Activated CD8-positive, alpha-beta T cell treated with anti-CD3 and anti-CD28 coated beads for 36 hours (primary cell): ENCODE measurements at regions of chr11 and their contacts with region 1.

Region 1: GRCh38 chr11:75328426-75329277 is 22.8 kb downstream of the ARRB1 start:
- DNase-seq: peak; percentile 81
- ATAC-seq: peak; percentile 67
- H3K4me3 Mint-ChIP-seq: no peak overlapping the region
- H3K27ac Mint-ChIP-seq: peak overlapping the region; percentile 18
- H3K4me1 Mint-ChIP-seq: peaks cover 65% of the 10 kb centered on the region
- H3K27me3 Mint-ChIP-seq: no peaks in the 10 kb centered on the region
- CTCF ChIP-seq: no peak

Region 2: DNA sequence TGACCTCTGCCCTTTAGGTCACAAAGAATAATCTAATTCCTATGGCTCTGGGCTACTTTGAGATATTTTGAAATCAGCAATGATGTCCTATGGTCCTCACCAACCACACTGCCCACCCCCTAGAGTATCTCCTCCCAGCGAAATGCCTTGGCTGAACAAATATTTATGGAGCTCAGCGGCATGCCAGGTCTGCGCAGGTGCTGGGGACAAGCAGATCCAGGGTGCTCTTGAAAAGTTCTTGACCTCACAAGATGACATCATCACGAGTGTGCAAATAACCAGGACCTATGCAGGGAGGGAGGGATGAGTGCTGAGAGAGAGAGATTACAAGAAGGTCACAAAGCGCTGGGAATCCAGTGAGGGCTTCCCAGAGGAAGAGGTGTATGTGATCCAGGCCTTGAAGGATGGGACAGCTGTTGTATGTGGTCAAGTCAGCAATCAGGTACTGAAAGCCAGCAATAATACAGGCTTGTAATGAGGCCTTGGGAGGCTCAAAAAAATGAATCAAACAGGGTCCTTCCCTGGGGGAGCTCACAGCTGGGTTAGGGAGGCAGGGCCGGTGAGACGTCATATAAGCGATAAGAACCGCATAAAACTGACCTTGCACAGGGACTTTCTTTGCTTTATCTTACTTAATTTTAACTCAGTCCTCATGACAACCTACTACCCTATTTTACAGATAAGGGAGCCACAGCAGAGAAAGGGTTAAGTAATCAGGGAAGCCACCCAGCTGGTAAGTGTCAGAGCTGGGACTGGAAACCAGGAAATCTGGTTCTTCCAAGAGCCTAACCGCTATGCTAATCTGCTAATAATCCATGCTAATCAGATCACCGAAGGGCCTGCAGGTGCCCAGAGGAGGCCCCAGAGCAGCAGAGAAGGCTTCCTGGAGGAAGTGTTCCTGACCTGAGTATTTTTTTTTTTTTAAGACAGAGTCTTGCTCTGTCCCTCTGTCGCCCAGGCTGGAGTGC is 14.5 kb after region 1 on chr11:
- CTCF ChIA-PET with region 1: interaction called, 15 read pairs
- POLR2A ChIA-PET with region 1: interaction called, 9 read pairs
- intact Hi-C with region 1: no loop called
- DNase-seq: no peak
- ATAC-seq: no peak
- H3K4me3 Mint-ChIP-seq: no peak overlapping the region
- H3K27ac Mint-ChIP-seq: peak overlapping the region; percentile 6
- H3K4me1 Mint-ChIP-seq: peaks cover 97% of the 10 kb centered on the region
- H3K27me3 Mint-ChIP-seq: no peaks in the 10 kb centered on the region
- CTCF ChIP-seq: no peak